ENCODE measurements at regions of chrX and their contacts with region 1.

Region 1: DNA sequence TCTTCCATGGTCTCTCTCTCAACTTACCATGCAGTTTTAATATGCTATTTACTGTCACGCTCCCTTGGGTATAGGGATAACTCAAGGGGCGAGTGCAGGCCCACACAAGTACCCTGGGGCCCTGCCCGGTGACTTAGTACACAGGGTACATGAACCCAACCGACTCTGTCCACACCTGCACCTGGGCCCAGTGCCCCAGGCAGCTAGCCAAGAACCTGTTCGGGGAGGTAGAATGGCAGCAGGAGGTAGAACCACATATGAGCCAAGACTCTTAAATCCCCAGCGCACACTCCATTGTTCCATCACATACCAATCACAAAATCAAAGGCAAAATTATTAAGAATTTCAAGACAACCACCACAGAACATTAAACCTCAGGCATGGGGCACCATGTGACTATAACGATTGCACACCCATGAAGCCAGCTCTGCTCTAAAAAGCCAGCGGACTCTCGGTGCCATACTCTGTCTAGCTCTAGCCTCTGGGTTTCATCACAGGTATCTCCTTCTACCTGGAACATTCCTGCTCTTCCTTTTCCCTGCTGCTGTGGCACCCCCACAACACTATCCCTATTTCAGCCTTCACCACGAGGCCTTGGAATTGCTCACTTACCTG is 14.6 kb downstream of the PHF8 start:
- DNase-seq: no peak
- H3K4me3 ChIP-seq: no peak overlapping the region
- H3K27ac ChIP-seq: no peak overlapping the region
- H3K27me3 ChIP-seq: no peaks in the 10 kb centered on the region
- CTCF ChIP-seq: no peak

Region 2: DNA sequence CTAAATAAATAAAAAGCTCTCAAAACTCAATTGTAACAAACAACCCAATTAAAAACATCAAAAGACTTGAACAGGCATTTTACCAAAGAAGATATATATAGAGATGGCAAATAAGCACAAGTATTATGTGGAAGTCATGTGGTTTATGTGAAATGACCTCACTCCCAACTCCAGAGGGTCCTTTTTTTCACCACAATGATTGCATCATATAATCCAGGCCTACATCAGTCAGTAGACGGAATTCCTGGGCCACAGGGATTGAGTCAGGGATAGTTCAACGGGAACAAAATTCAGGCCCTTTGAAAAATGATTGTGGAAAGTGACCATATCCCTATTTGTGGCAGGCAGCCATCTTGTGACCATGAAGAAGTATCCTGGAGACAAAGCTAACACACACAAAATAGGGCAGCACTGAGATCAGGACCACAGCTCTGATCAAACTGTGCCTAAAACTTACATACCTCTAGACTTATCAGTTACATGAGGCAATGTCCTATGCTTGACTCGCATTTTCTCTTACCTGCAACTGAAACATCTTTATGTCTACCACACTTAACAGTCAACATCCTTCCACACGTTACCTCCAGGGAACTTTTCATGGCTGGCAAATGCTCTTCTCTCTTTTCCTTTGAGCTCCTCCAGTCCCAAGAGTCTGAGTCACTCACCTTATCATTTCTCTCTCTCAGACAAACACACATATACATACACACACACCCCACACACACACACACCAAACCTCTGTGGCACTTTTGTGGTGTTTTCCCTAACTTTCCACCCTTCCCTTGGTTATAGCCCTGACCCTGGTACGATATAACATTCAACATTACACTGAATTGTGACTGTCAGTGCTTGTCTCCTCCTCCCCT is 98.9 kb before region 1 on chrX:
- CTCF ChIA-PET with region 1: no interaction called
- POLR2A ChIA-PET with region 1: no interaction called
- DNase-seq: peak; percentile 1
- H3K4me3 ChIP-seq: no peak overlapping the region
- H3K27ac ChIP-seq: no peak overlapping the region
- H3K27me3 ChIP-seq: no peaks in the 10 kb centered on the region
- CTCF ChIP-seq: no peak

Region 3: GRCh38 chrX:54048412-54048811 is 18.8 kb after region 1 on chrX:
- CTCF ChIA-PET with region 1: no interaction called
- POLR2A ChIA-PET with region 1: no interaction called
- DNase-seq: no peak
- H3K4me3 ChIP-seq: no peak overlapping the region
- H3K27ac ChIP-seq: no peak overlapping the region
- H3K27me3 ChIP-seq: no peaks in the 10 kb centered on the region
- CTCF ChIP-seq: no peak

Region 4: GRCh38 chrX:54509400-54509799 is 479.8 kb after region 1 on chrX:
- CTCF ChIA-PET with region 1: no interaction called
- POLR2A ChIA-PET with region 1: interaction called, 16 read pairs
- DNase-seq: no peak
- H3K4me3 ChIP-seq: no peak overlapping the region
- H3K27ac ChIP-seq: peak overlapping the region; percentile 0
- H3K27me3 ChIP-seq: no peaks in the 10 kb centered on the region
- CTCF ChIP-seq: no peak